ENCODE measurements at regions of chr1 and their contacts with region 1.

Region 1: DNA sequence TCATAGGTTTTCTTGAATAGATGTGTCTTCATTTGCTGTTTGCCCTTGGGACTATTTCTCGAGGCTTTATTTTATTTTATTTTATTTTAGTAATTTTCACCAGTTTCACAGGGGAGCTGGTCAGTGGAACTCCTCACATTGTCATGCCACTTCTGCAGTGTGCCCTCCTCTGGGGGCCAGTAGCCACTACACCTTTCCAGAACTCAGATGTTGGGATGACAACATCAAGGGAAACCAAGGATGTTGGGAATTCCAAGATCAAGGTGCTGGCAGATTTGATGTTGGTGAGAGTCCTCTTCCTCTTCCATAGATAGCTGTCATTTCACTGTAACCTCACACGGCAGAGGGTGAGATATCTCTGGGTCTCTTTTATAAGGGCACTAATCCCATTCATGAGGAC is 35.5 kb downstream of the SLC26A9 start:
- DNase-seq: peak; percentile 30
- H3K4me3 ChIP-seq: no peak overlapping the region
- H3K27ac ChIP-seq: no peak overlapping the region
- H3K4me1 ChIP-seq: peaks cover 5% of the 10 kb centered on the region
- H3K27me3 ChIP-seq: no peaks in the 10 kb centered on the region
- CTCF ChIP-seq: peak; percentile 72 to 77

Region 2: GRCh38 chr1:205800981-205801703 is 106.7 kb before region 1 on chr1:
- CTCF ChIA-PET with region 1: no interaction called
- dilution Hi-C with region 1: no loop called
- in situ Hi-C with region 1: no loop called
- intact Hi-C with region 1: no loop called
- DNase-seq: no peak
- H3K4me3 ChIP-seq: no peak overlapping the region
- H3K27ac ChIP-seq: no peak overlapping the region
- H3K4me1 ChIP-seq: peaks cover 20% of the 10 kb centered on the region
- H3K27me3 ChIP-seq: no peaks in the 10 kb centered on the region
- CTCF ChIP-seq: no peak

Region 3: GRCh38 chr1:205977402-205978014 is 69.7 kb after region 1 on chr1:
- CTCF ChIA-PET with region 1: interaction called, 6 read pairs
- dilution Hi-C with region 1: loop called (anchors 5 kb)
- in situ Hi-C with region 1: no loop called
- intact Hi-C with region 1: no loop called
- DNase-seq: peak; percentile 54
- H3K4me3 ChIP-seq: no peak overlapping the region
- H3K27ac ChIP-seq: no peak overlapping the region
- H3K4me1 ChIP-seq: no peaks in the 10 kb centered on the region
- H3K27me3 ChIP-seq: no peaks in the 10 kb centered on the region
- CTCF ChIP-seq: peak; percentile 98 to 99

Measured in mammary epithelial cell (primary cell).